ENCODE measurements at regions of chr10 and their contacts with region 1.

Region 1: GRCh38 chr10:119203006-119203405 is 4.4 kb upstream of the GRK5 start:
- DNase-seq: no peak
- H3K4me3 ChIP-seq: no peak overlapping the region
- H3K27ac ChIP-seq: peak overlapping the region; percentile 39
- H3K4me1 ChIP-seq: peaks cover 25% of the 10 kb centered on the region
- H3K27me3 ChIP-seq: no peaks in the 10 kb centered on the region
- CTCF ChIP-seq: no peak

Region 2: DNA sequence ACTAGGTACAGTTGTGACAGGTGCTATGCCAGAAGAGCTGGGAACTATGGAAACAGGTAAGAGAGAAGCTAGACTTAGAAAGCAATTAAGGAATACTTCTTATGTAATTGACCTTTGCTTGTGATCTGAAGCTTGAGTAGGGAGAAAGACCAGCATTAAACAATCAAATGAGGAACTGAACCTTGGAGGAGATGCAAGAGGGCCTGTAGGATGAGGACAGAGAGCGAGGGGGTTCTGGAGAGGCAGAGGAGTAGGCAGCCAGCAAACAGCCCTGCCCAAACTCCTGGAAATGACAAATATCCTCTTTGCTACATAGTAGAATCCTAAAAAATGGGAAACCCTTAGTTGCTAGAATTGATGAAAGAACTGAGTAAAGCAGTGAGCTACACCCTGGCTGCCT is 819.3 kb before region 1 on chr10:
- intact Hi-C with region 1: no loop called
- DNase-seq: no peak
- H3K4me3 ChIP-seq: no peak overlapping the region
- H3K27ac ChIP-seq: no peak overlapping the region
- H3K4me1 ChIP-seq: no peaks in the 10 kb centered on the region
- H3K27me3 ChIP-seq: peaks cover 29% of the 10 kb centered on the region
- CTCF ChIP-seq: no peak

Region 3: GRCh38 chr10:119416855-119417254 is 213.8 kb after region 1 on chr10:
- intact Hi-C with region 1: loop called (anchors 5 kb)
- DNase-seq: peak; percentile 73
- H3K4me3 ChIP-seq: no peak overlapping the region
- H3K27ac ChIP-seq: peak overlapping the region; percentile 89
- H3K4me1 ChIP-seq: peaks cover 70% of the 10 kb centered on the region
- H3K27me3 ChIP-seq: no peaks in the 10 kb centered on the region
- CTCF ChIP-seq: peak; percentile 84

Region 4: GRCh38 chr10:119441151-119441821 is 238.3 kb after region 1 on chr10:
- intact Hi-C with region 1: loop called (anchors 5 kb)
- DNase-seq: peak; percentile 54
- H3K4me3 ChIP-seq: no peak overlapping the region
- H3K27ac ChIP-seq: peak overlapping the region; percentile 86
- H3K4me1 ChIP-seq: peaks cover 47% of the 10 kb centered on the region
- H3K27me3 ChIP-seq: no peaks in the 10 kb centered on the region
- CTCF ChIP-seq: no peak

Measured in left ventricle myocardium inferior (tissue), 1 donor.